HepG2 (cell line): ENCODE measurements at regions of chr3 and their contacts with region 1.

Region 1: GRCh38 chr3:45760878-45761711 is 35.2 kb downstream of the SLC6A20 start:
- DNase-seq: peak; percentile 39
- ATAC-seq: peak; percentile 94
- H3K4me3 ChIP-seq: no peak overlapping the region
- H3K27ac ChIP-seq: no peak overlapping the region
- H3K4me1 ChIP-seq: peaks cover 6% of the 10 kb centered on the region; the same call in 1 of the 2 replicates
- H3K27me3 ChIP-seq: peaks cover 2 to 48% of the 10 kb centered on the region in 2 experiments
- CTCF ChIP-seq: peak; percentile 87
- EP300 ChIP-seq: no peak
- POLR2A ChIP-seq: no peak
- RAD21 ChIP-seq: peak; percentile 77

Region 2: GRCh38 chr3:45841757-45842491 is 80.8 kb after region 1 on chr3 and contains the start of gene LZTFL1:
- CTCF ChIA-PET with region 1: no interaction called
- POLR2A ChIA-PET with region 1: no interaction called
- in situ Hi-C with region 1: no loop called
- intact Hi-C with region 1: no loop called
- DNase-seq: peak; percentile 93
- ATAC-seq: peak; percentile 95
- H3K4me3 ChIP-seq: peak within 1 kb of the TSS; percentile 76 to 91 (median 88)
- H3K27ac ChIP-seq: peak within 1 kb of the TSS; percentile 33
- H3K4me1 ChIP-seq: peaks cover 16% of the 10 kb centered on the region
- H3K27me3 ChIP-seq: no peaks in the 10 kb centered on the region; a peak in 1 of 5 replicates
- CTCF ChIP-seq: no peak
- EP300 ChIP-seq: peak in 1 of 2 experiments; percentile 85; a peak in 1 of 4 replicates
- POLR2A ChIP-seq: peak in 1 of 2 experiments; percentile 73; a peak in 2 of 4 replicates
- RAD21 ChIP-seq: no peak
- total RNA-seq, gene LZTFL1: 16.6 and 27.3 TPM in 2 replicates

Region 3: GRCh38 chr3:45929042-45929679 is 168.1 kb after region 1 on chr3:
- CTCF ChIA-PET with region 1: interaction called, 15 read pairs
- POLR2A ChIA-PET with region 1: interaction called, 5 read pairs
- in situ Hi-C with region 1: loop called (anchors 5 kb)
- intact Hi-C with region 1: loop called (anchors 1 kb)
- DNase-seq: peak; percentile 12
- ATAC-seq: peak; percentile 96
- H3K4me3 ChIP-seq: no peak overlapping the region
- H3K27ac ChIP-seq: no peak overlapping the region
- H3K4me1 ChIP-seq: no peaks in the 10 kb centered on the region
- H3K27me3 ChIP-seq: no peaks in the 10 kb centered on the region
- CTCF ChIP-seq: peak; percentile 80
- EP300 ChIP-seq: no peak
- POLR2A ChIP-seq: no peak
- RAD21 ChIP-seq: peak; percentile 72